Heart right ventricle (tissue), 16 donors: ENCODE measurements at regions of chr2 and their contacts with region 1.

Region 1: GRCh38 chr2:30747211-30747610 is 60.0 kb downstream of the CAPN13 start:
- DNase-seq: no peak
- ATAC-seq: no peak
- H3K4me3 ChIP-seq: no peak overlapping the region
- H3K27ac ChIP-seq: no peak overlapping the region
- H3K4me1 ChIP-seq: no peaks in the 10 kb centered on the region
- H3K27me3 ChIP-seq: peaks cover 0 to 18% (median 7%) of the 10 kb centered on the region in 7 donors
- CTCF ChIP-seq: no peak

Region 2: DNA sequence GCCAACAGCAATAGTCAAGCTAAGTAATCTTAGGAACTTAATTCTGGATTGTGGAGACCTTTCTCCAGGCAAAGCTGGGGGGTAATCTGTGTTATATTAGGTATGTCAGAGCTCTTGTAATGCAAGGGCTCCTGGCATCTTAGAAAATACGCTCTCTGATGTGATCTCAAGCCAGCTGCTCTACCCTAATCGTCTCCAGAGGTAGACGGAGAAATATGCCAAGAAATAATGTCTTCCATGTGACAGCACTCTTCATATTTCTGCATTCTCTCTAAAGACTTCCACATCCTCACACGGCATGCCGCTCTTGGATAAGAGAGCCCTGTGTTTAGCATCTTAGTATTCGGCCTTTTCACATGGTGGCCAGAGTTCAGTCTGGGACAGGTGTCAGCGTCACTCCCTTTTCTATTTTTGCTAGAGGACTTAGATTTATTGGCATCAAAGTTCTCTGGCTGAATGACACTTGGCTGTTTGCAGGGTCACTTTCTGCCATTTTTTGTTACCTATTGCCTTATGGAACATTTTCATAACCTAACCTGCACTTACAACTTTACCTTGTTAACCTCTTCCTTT is 34.8 kb after region 1 on chr2:
- intact Hi-C with region 1: loop called in 1 of 10 experiments (anchors 1 kb)
- DNase-seq: no peak
- ATAC-seq: peak in 2 of 8 donors; percentile 44 to 75
- H3K4me3 ChIP-seq: no peak overlapping the region
- H3K27ac ChIP-seq: no peak overlapping the region
- H3K4me1 ChIP-seq: no peaks in the 10 kb centered on the region
- H3K27me3 ChIP-seq: peaks cover 0 to 18% (median 3%) of the 10 kb centered on the region in 7 donors
- CTCF ChIP-seq: no peak